ENCODE measurements at regions of chr22 and their contacts with region 1.

Region 1: GRCh38 chr22:22884010-22884887 is 3.4 kb upstream of the IGLL5 start:
- DNase-seq: no peak
- H3K4me3 ChIP-seq: no peak overlapping the region
- H3K27ac ChIP-seq: no peak overlapping the region
- H3K4me1 ChIP-seq: peaks cover 0 to 67% (median 38%) of the 10 kb centered on the region in 6 donors
- H3K27me3 ChIP-seq: peaks cover 0 to 18% (median 0%) of the 10 kb centered on the region in 7 donors
- CTCF ChIP-seq: peak; percentile 43 to 89 (median 73)
- POLR2A ChIP-seq: no peak

Region 2: GRCh38 chr22:22710719-22711531 is 173.3 kb before region 1 on chr22:
- intact Hi-C with region 1: loop called (anchors 10 kb)
- DNase-seq: peak; percentile 92
- H3K4me3 ChIP-seq: no peak overlapping the region
- H3K27ac ChIP-seq: no peak overlapping the region
- H3K4me1 ChIP-seq: peaks cover 0 to 42% (median 22%) of the 10 kb centered on the region in 6 donors
- H3K27me3 ChIP-seq: no peaks in the 10 kb centered on the region
- CTCF ChIP-seq: peak; percentile 55 to 97 (median 90)
- POLR2A ChIP-seq: no peak

Region 3: DNA sequence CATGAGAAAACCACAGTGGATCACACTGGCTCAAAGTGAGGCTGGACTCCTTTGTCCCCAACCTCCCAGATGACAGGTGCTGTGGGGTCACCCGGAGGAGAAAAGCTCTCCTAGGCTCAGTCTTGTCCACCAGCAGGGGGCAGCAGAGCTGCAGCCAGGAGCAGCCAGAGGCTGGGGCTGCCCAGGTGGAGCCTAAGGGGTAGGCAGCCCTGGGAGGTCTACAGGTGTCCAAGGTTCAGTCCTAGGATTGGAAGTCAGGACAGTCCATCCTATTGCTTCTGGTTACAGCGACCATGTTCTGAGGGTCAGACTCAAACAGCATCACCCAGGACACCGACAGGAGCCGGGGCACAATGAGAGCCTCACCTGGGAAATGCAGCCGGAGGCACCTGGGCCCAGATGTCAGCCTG is 74.2 kb before region 1 on chr22:
- intact Hi-C with region 1: loop called (anchors 10 kb)
- DNase-seq: peak; percentile 93
- H3K4me3 ChIP-seq: no peak overlapping the region
- H3K27ac ChIP-seq: peak overlapping the region in 2 of 8 donors; percentile 23 to 38
- H3K4me1 ChIP-seq: peaks cover 0 to 16% (median 8%) of the 10 kb centered on the region in 6 donors
- H3K27me3 ChIP-seq: peaks cover 0 to 7% (median 0%) of the 10 kb centered on the region in 7 donors
- CTCF ChIP-seq: peak; percentile 13 to 84 (median 64)
- POLR2A ChIP-seq: no peak

Measured in spleen (tissue), 13 donors.